ENCODE measurements at regions of chr1 and their contacts with region 1.

Region 1: GRCh38 chr1:61049850-61050540 is 32.4 kb upstream of the NFIA start:
- DNase-seq: peak; percentile 93 to 96 (median 95)
- H3K4me3 ChIP-seq: peak overlapping the region; percentile 52 to 72 (median 61)
- H3K27ac ChIP-seq: peak overlapping the region; percentile 91 to 93
- H3K4me1 ChIP-seq: peaks cover 0 to 17% (median 9%) of the 10 kb centered on the region in 3 donors
- H3K27me3 ChIP-seq: peaks cover 6% of the 10 kb centered on the region
- CTCF ChIP-seq: peak; percentile 98

Region 2: DNA sequence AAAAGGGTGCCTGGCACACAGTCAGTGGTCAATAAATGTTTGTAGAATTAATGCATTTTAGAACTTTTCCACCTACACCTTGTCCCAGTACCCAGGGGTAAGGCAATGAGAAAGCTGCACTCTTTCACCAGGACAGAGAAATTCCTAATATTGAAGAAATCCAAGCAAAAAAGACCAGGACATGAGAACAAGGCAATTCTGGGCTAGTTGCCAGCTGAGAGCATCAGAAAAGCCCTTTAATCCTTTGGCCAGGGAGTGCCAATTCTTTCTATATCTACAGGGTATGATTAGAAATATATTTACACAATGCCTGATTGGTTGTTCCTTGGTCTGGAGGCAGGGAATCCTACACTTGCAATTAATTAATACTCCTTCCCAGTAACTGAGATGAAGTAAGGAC is 460.1 kb before region 1 on chr1:
- intact Hi-C with region 1: no loop called
- DNase-seq: no peak
- H3K4me3 ChIP-seq: no peak overlapping the region
- H3K27ac ChIP-seq: no peak overlapping the region
- H3K4me1 ChIP-seq: no peaks in the 10 kb centered on the region
- H3K27me3 ChIP-seq: no peaks in the 10 kb centered on the region
- CTCF ChIP-seq: no peak

Region 3: GRCh38 chr1:61132176-61133001 is 82.4 kb after region 1 on chr1:
- intact Hi-C with region 1: no loop called
- DNase-seq: peak in 1 of 5 donors; percentile 58
- H3K4me3 ChIP-seq: peak overlapping the region in 1 of 3 donors; percentile 4
- H3K27ac ChIP-seq: peak overlapping the region; percentile 23 to 54
- H3K4me1 ChIP-seq: peaks cover 0 to 8% (median 4%) of the 10 kb centered on the region in 3 donors
- H3K27me3 ChIP-seq: no peaks in the 10 kb centered on the region
- CTCF ChIP-seq: no peak

Region 4: GRCh38 chr1:61210435-61211154 is 160.6 kb after region 1 on chr1:
- intact Hi-C with region 1: no loop called
- DNase-seq: no peak
- H3K4me3 ChIP-seq: no peak overlapping the region
- H3K27ac ChIP-seq: no peak overlapping the region
- H3K4me1 ChIP-seq: peaks cover 0 to 15% (median 3%) of the 10 kb centered on the region in 3 donors
- H3K27me3 ChIP-seq: no peaks in the 10 kb centered on the region
- CTCF ChIP-seq: peak; percentile 30

Region 5: GRCh38 chr1:61463220-61463619 is 413.2 kb after region 1 on chr1:
- intact Hi-C with region 1: loop called (anchors 5 kb)
- DNase-seq: no peak
- H3K4me3 ChIP-seq: no peak overlapping the region
- H3K27ac ChIP-seq: no peak overlapping the region
- H3K4me1 ChIP-seq: no peaks in the 10 kb centered on the region
- H3K27me3 ChIP-seq: no peaks in the 10 kb centered on the region
- CTCF ChIP-seq: no peak